H1 (cell line): ENCODE measurements at regions of chr14 and their contacts with region 1.

Region 1: DNA sequence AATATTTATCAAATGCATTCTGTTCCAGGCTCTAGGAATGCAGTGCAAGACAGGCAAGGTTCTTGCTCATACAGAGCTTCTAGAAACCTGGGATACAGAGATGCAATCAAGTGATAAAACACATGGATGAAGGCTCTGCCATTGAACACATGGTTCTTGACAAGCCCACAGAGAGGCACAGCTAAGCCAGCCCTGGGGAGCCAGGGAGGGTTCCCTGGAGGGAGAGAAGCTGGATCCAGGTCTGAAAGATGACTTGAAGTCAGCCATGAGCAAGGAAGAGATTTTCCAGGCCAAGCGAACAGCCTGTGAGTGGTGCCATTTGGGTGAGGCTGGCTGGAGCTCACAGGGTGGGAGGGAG is 66.2 kb downstream of the IRF2BPL start:
- DNase-seq: no peak
- H3K4me3 ChIP-seq: peak overlapping the region in 1 of 4 experiments; percentile 44; a peak in 2 of 8 replicates
- H3K27ac ChIP-seq: peak overlapping the region; percentile 55; the same call in 1 of the 2 replicates
- H3K4me1 ChIP-seq: peaks cover 27 to 37% (median 32%) of the 10 kb centered on the region in 4 experiments
- H3K27me3 ChIP-seq: no peaks in the 10 kb centered on the region
- CTCF ChIP-seq: no peak
- EP300 ChIP-seq: no peak
- POLR2A ChIP-seq: no peak
- RAD21 ChIP-seq: no peak

Region 2: DNA sequence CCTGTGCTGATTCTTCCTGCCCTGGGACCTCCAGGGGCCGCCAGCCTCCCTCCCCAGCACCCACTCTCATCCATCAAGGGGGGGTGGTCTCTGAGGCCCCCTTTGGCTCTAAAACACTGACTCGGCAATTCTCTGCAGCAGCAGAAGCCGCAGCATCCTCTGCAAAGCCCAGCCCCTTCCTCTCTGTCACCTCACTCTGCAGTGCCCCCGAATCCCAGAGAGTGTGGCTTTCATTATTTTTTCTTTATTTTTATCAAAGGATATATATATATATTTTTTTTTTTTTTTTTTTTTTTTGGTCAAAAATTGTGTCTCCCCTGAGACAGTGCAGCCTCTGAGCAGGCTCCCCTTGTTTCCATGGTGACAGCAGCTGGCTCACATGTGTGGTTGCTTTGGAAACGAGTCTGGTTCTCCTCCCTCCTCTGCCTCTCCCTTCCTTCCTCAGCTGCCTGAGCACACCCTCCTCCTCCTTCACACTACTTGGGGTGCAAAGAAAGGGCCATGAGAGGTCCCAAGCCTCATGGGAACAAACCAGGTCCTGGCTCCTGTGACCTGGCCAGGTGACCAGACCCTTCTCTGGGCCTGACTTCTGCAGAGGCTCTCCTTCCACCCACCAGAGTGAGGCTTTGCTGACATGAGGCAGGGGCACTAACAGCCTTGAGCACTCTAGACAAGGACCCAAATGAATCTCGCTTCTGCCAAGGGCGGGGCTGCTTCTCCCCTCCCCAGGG is 35.6 kb before region 1 on chr14:
- CTCF ChIA-PET with region 1: interaction called, 151 read pairs
- POLR2A ChIA-PET with region 1: interaction called, 28 read pairs
- DNase-seq: no peak
- H3K4me3 ChIP-seq: no peak overlapping the region
- H3K27ac ChIP-seq: no peak overlapping the region
- H3K4me1 ChIP-seq: peaks cover 15 to 48% (median 33%) of the 10 kb centered on the region in 4 experiments
- H3K27me3 ChIP-seq: no peaks in the 10 kb centered on the region
- CTCF ChIP-seq: no peak
- EP300 ChIP-seq: no peak
- POLR2A ChIP-seq: no peak
- RAD21 ChIP-seq: 0 out of 4 replicates have a peak, but pooled peaks of 1 of the 2 experiments have one; percentile 10

Region 3: GRCh38 chr14:76947078-76947837 is 15.0 kb before region 1 on chr14:
- CTCF ChIA-PET with region 1: interaction called, 17 read pairs
- POLR2A ChIA-PET with region 1: interaction called, 29 read pairs
- DNase-seq: peak; percentile 84 to 93
- H3K4me3 ChIP-seq: peak overlapping the region in 3 of 4 experiments; percentile 20 to 45 (median 27); a peak in 5 of 8 replicates
- H3K27ac ChIP-seq: peak overlapping the region; percentile 71
- H3K4me1 ChIP-seq: peaks cover 16 to 20% (median 19%) of the 10 kb centered on the region in 4 experiments
- H3K27me3 ChIP-seq: no peaks in the 10 kb centered on the region
- CTCF ChIP-seq: peak; percentile 35 to 42 (median 38)
- EP300 ChIP-seq: peak in 1 of 2 experiments; percentile 41; a peak in 1 of 3 replicates
- POLR2A ChIP-seq: no peak
- RAD21 ChIP-seq: peak; percentile 53 to 67

Region 4: GRCh38 chr14:76977793-76978720 is 15.8 kb after region 1 on chr14:
- CTCF ChIA-PET with region 1: interaction called, 15 read pairs
- POLR2A ChIA-PET with region 1: interaction called, 7 read pairs
- DNase-seq: peak in 1 of 2 experiments; percentile 48
- H3K4me3 ChIP-seq: no peak overlapping the region
- H3K27ac ChIP-seq: no peak overlapping the region
- H3K4me1 ChIP-seq: peaks cover 0 to 10% (median 2%) of the 10 kb centered on the region in 4 experiments; a peak in 4 of 7 replicates
- H3K27me3 ChIP-seq: no peaks in the 10 kb centered on the region
- CTCF ChIP-seq: no peak
- EP300 ChIP-seq: no peak
- POLR2A ChIP-seq: no peak
- RAD21 ChIP-seq: no peak

Region 5: GRCh38 chr14:77014004-77014604 is 51.8 kb after region 1 on chr14:
- CTCF ChIA-PET with region 1: interaction called, 21 read pairs
- POLR2A ChIA-PET with region 1: interaction called, 3 read pairs
- DNase-seq: no peak
- H3K4me3 ChIP-seq: no peak overlapping the region
- H3K27ac ChIP-seq: no peak overlapping the region
- H3K4me1 ChIP-seq: peaks cover 0 to 12% (median 2%) of the 10 kb centered on the region in 4 experiments; a peak in 3 of 7 replicates
- H3K27me3 ChIP-seq: no peaks in the 10 kb centered on the region; a peak in 1 of 7 replicates
- CTCF ChIP-seq: no peak
- EP300 ChIP-seq: no peak
- POLR2A ChIP-seq: no peak
- RAD21 ChIP-seq: no peak

Region 6: GRCh38 chr14:77028384-77029231 is 66.3 kb after region 1 on chr14 and contains the start of gene IRF2BPL:
- CTCF ChIA-PET with region 1: interaction called, 13 read pairs
- POLR2A ChIA-PET with region 1: interaction called, 71 read pairs
- DNase-seq: peak in 1 of 2 experiments; percentile 88
- H3K4me3 ChIP-seq: peak within 1 kb of the TSS; percentile 61 to 86 (median 70)
- H3K27ac ChIP-seq: peak within 1 kb of the TSS; percentile 91
- H3K4me1 ChIP-seq: peaks cover 6 to 40% (median 27%) of the 10 kb centered on the region in 4 experiments
- H3K27me3 ChIP-seq: peaks cover 0 to 5% (median 3%) of the 10 kb centered on the region in 4 experiments; a peak in 5 of 7 replicates
- CTCF ChIP-seq: no peak
- EP300 ChIP-seq: 0 out of 3 replicates have a peak, but pooled peaks of 1 of the 2 experiments have one; percentile 42
- POLR2A ChIP-seq: peak in 1 of 2 experiments; percentile 85; a peak in 2 of 3 replicates
- RAD21 ChIP-seq: peak; percentile 0 to 1; a peak in 2 of 4 replicates
- total RNA-seq, gene IRF2BPL: 57.0 and 59.6 TPM in 2 replicates

Region 7: DNA sequence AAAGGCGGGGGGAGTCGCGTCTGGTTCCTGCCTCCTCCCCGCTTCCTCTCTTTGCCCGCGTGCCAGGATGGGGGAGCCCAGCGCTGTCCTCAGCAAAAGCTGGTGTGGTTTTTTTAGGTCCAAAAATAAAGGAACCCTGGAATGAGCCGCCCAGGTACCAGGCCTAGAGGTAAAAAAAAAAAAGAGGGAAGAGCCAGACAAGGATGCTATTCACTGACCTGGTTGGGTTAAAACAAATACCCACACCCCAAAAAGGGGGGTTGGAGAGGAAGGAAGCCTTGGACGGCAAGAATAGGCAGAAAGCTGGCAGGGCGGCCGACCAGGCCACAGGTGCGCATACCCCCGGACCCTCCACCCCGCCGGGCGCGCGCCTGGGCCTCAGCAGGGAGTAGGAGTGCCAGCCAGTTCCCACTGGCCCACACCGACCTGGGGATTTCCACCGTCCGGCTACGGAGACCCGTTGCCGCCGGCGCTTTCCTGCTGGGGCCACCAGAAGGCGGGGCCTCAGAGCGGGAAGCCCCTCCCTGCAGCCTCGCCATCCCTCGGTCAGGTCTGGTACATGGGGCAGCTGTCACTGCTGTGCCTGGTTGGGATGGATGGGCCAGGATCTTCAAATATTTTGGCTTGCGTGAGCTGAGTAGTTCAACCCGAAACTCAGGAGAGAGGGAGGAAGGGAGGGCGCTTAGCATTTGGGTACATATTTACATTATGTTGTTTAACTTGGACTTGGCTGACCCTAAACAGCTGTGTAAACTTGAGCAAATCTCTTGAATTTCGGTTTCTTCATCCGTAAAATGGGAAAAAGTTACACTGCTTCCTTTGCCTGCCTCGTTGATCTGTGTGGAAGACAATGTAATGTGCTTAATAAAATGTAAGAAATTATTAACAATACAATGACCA is 71.6 kb after region 1 on chr14:
- CTCF ChIA-PET with region 1: interaction called, 4 read pairs
- POLR2A ChIA-PET with region 1: interaction called, 71 read pairs
- DNase-seq: peak in 1 of 2 experiments; percentile 90
- H3K4me3 ChIP-seq: peak overlapping the region; percentile 28 to 60 (median 42)
- H3K27ac ChIP-seq: peak overlapping the region; percentile 92
- H3K4me1 ChIP-seq: peaks cover 22 to 49% (median 34%) of the 10 kb centered on the region in 4 experiments
- H3K27me3 ChIP-seq: peaks cover 0 to 4% (median 2%) of the 10 kb centered on the region in 4 experiments; a peak in 2 of 7 replicates
- CTCF ChIP-seq: no peak
- EP300 ChIP-seq: peak in 1 of 2 experiments; percentile 83; a peak in 1 of 3 replicates
- POLR2A ChIP-seq: peak in 1 of 2 experiments; percentile 79; a peak in 1 of 3 replicates
- RAD21 ChIP-seq: no peak; a peak in 1 of 4 replicates